ENCODE measurements at regions of chr1 and their contacts with region 1.

Region 1: GRCh38 chr1:33295450-33296081 is 25.3 kb downstream of the A3GALT2 start:
- H3K4me3 ChIP-seq: no peak overlapping the region
- H3K27ac ChIP-seq: no peak overlapping the region
- H3K4me1 ChIP-seq: no peaks in the 10 kb centered on the region
- CTCF ChIP-seq: peak; percentile 85

Region 2: DNA sequence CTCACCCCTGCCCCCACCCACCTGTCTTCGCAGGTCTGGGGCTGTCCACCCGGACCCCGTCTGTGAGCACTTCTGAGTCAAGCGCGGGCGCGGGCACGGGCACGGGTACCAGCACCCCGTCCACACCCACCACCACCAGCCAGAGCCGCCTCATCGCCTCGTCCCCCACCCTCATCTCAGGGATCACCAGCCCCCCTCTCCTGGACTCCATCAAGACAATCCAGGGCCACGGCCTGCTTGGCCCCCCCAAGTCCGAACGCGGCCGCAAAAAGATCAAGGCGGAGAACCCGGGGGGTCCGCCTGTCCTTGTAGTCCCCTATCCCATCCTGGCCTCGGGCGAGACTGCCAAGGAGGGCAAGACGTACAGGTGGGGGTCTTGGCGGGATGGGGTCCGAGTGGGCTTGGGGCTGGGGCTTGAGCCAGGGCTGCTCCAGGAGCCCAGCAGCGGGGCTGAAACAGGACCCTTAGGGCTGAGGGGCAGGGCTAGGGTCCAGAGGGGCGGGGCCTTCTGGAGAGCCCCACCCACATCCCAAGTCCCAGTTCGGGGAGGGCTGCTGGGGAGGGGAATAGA is 15.4 kb before region 1 on chr1:
- CTCF ChIA-PET with region 1: interaction called, 17 read pairs
- POLR2A ChIA-PET with region 1: no interaction called
- H3K4me3 ChIP-seq: no peak overlapping the region
- H3K27ac ChIP-seq: no peak overlapping the region
- H3K4me1 ChIP-seq: no peaks in the 10 kb centered on the region
- CTCF ChIP-seq: no peak

Region 3: GRCh38 chr1:33319949-33320605 is 24.5 kb after region 1 on chr1:
- CTCF ChIA-PET with region 1: interaction called, 12 read pairs
- POLR2A ChIA-PET with region 1: no interaction called
- H3K4me3 ChIP-seq: no peak overlapping the region
- H3K27ac ChIP-seq: no peak overlapping the region
- H3K4me1 ChIP-seq: no peaks in the 10 kb centered on the region
- CTCF ChIP-seq: no peak

Region 4: DNA sequence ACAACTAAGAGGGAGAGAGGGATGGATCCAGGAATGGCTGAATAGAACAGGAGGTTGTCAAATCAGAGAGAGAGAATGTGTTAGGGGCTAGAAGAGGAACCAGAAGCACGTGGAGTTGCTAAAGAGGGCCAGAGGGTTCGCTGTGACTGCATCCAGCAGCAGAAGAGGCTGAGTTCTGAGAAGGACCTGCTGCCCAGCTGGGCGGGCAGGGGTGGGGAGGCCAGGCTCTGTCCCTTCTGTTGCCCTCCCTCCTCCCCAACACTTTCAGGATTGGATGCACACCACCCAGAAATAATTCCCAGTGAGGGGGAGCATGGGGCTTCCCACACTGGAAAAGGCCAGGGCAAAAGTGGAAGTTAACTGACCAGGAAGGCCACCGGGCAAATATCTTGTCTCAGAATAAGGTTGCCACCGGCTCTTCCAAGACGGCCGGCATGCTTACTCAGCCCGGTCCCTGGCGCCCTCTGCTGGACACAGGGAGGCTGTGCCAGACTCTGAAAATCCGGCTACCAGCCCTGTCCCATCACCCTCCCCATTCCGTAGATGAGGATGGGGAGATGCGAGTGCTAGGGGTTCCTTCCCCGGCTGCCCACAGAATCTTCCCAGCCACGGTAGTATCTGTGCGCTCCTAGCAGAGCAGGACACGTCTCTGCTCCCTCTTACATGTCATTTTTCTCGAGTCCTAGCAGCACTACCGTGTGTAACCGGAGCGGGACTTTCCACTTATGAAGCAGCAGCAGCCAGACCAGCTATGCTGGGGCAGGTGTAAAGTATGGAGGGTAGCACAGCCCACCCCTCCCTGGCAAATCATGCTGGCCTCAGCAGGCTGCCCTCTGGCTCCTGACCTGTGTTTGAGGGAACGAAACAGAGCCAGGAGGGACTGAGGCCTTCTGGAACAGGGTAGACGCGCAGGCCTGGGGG is 72.2 kb after region 1 on chr1:
- CTCF ChIA-PET with region 1: interaction called, 135 read pairs
- POLR2A ChIA-PET with region 1: no interaction called
- H3K4me3 ChIP-seq: no peak overlapping the region
- H3K27ac ChIP-seq: no peak overlapping the region
- H3K4me1 ChIP-seq: peaks cover 11% of the 10 kb centered on the region
- CTCF ChIP-seq: peak; percentile 80

Region 5: DNA sequence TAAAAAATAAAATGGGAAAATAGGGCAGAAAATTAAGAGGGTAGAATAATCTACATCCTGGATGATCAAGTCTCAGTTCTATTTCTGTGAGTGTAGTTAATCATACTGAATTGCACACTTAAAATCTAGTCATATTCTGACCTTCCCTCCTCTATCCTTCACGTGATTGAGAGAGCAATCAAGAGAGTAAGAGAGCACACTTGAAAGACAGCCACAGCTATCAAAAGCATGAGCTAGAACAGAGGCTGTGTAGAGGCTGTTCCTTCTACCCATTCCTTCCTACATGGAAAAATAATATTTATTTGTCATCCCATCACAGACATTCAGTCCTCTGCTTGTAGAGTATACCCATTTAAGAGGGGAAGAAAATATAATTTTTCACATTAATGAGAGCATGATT is 83.0 kb after region 1 on chr1:
- CTCF ChIA-PET with region 1: no interaction called
- POLR2A ChIA-PET with region 1: no interaction called
- H3K4me3 ChIP-seq: no peak overlapping the region
- H3K27ac ChIP-seq: no peak overlapping the region
- H3K4me1 ChIP-seq: no peaks in the 10 kb centered on the region; the same call in 1 of the 2 replicates
- CTCF ChIP-seq: no peak

Region 6: GRCh38 chr1:33455539-33456501 is 160.3 kb after region 1 on chr1:
- CTCF ChIA-PET with region 1: interaction called, 30 read pairs
- POLR2A ChIA-PET with region 1: no interaction called
- H3K4me3 ChIP-seq: no peak overlapping the region
- H3K27ac ChIP-seq: no peak overlapping the region
- H3K4me1 ChIP-seq: no peaks in the 10 kb centered on the region
- CTCF ChIP-seq: peak; percentile 91

Region 7: GRCh38 chr1:33472349-33472980 is 176.9 kb after region 1 on chr1 and contains the start of gene ZSCAN20:
- CTCF ChIA-PET with region 1: interaction called, 114 read pairs
- POLR2A ChIA-PET with region 1: no interaction called
- H3K4me3 ChIP-seq: peak within 1 kb of the TSS; percentile 81
- H3K27ac ChIP-seq: peak within 1 kb of the TSS; percentile 12; the same call in 1 of the 2 replicates
- H3K4me1 ChIP-seq: no peaks in the 10 kb centered on the region
- CTCF ChIP-seq: no peak

Region 8: DNA sequence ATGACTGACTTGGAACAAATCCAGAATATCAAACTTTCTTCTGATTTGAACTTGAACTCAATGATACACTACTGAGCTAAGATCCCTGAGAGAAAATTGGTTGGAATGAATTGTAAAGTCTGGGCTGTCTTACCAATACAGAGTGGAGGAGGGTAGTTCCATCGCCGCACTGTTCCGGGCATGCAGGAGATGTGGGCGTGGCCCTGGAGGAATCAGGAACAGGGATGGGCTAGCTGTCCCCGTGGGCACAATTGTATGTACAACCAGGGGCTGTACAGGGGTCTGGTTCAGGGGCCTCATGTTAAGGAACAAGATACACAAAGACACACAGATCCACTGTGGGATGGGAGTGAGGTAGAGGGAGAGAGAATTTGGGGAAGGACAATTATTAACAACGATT is 321.2 kb after region 1 on chr1:
- CTCF ChIA-PET with region 1: interaction called, 16 read pairs
- POLR2A ChIA-PET with region 1: no interaction called
- H3K4me3 ChIP-seq: no peak overlapping the region
- H3K27ac ChIP-seq: no peak overlapping the region
- H3K4me1 ChIP-seq: no peaks in the 10 kb centered on the region
- CTCF ChIP-seq: no peak

Measured in HEK293 (cell line).